Esophagus muscularis mucosa (tissue), 4 donors: ENCODE measurements at regions of chr7 and their contacts with region 1.

Region 1: GRCh38 chr7:123865517-123866117 is 20.6 kb downstream of the HYAL4 start:
- DNase-seq: no peak
- H3K4me3 ChIP-seq: no peak overlapping the region
- H3K27ac ChIP-seq: no peak overlapping the region
- H3K4me1 ChIP-seq: no peaks in the 10 kb centered on the region
- H3K27me3 ChIP-seq: no peaks in the 10 kb centered on the region
- CTCF ChIP-seq: peak; percentile 69 to 75 (median 72)
- EP300 ChIP-seq: no peak
- POLR2A ChIP-seq: no peak

Region 2: GRCh38 chr7:123580406-123581161 is 285.0 kb before region 1 on chr7:
- intact Hi-C with region 1: loop called (anchors 10 kb)
- DNase-seq: no peak
- H3K4me3 ChIP-seq: no peak overlapping the region
- H3K27ac ChIP-seq: no peak overlapping the region
- H3K4me1 ChIP-seq: no peaks in the 10 kb centered on the region
- H3K27me3 ChIP-seq: no peaks in the 10 kb centered on the region
- CTCF ChIP-seq: peak; percentile 44 to 67 (median 47)
- EP300 ChIP-seq: no peak
- POLR2A ChIP-seq: no peak

Region 3: GRCh38 chr7:123635551-123636359 is 229.9 kb before region 1 on chr7:
- intact Hi-C with region 1: loop called (anchors 10 kb)
- DNase-seq: no peak
- H3K4me3 ChIP-seq: no peak overlapping the region
- H3K27ac ChIP-seq: no peak overlapping the region
- H3K4me1 ChIP-seq: peaks cover 0 to 7% (median 0%) of the 10 kb centered on the region in 4 donors
- H3K27me3 ChIP-seq: peaks cover 0 to 4% (median 0%) of the 10 kb centered on the region in 4 donors
- CTCF ChIP-seq: peak; percentile 26 to 41 (median 34)
- EP300 ChIP-seq: no peak
- POLR2A ChIP-seq: no peak

Region 4: GRCh38 chr7:123682690-123683089 is 182.9 kb before region 1 on chr7:
- intact Hi-C with region 1: loop called (anchors 5 kb)
- DNase-seq: no peak
- H3K4me3 ChIP-seq: no peak overlapping the region
- H3K27ac ChIP-seq: no peak overlapping the region
- H3K4me1 ChIP-seq: peaks cover 0 to 11% (median 4%) of the 10 kb centered on the region in 4 donors
- H3K27me3 ChIP-seq: no peaks in the 10 kb centered on the region
- CTCF ChIP-seq: peak; percentile 34 to 54 (median 37)
- EP300 ChIP-seq: no peak
- POLR2A ChIP-seq: no peak

Region 5: DNA sequence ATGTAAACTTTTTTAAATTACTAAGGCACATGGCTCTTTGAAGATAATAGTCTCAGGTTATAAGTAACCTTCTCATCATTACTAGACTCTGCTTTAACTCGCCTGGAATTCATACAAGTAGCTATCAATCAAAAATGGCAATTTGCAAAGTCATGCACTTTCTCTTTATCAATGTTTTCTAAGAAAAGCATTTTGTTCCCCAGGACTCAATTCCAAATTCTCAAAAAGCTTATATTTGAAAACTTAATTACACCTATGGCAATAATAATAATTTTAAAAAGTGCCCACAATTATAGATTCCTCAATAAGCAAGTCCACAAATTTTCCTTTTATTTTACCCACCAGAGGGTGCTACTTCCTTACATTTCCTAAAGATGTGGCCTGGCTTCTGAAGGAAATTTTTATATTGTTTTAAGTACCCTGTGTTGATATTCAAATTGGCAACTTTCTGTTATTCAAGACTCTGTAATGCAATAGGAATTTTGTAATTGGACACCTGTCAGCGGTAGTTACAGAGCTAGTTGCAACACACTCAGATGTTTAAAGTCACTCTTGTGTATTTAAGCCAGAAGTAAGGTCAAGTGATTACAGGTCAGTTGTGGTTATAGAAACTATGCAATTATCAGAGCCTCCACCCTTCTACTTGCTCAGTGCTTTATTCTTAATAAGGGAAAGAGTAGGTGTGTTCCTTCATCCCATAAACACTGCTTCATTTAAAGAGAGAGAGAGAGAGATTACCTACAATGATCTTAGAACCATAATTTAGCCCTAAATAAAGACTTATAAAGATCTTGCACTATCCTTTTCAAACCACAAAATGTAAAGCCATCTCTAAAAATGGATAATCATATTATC is 67.7 kb before region 1 on chr7:
- intact Hi-C with region 1: loop called (anchors 2 kb)
- DNase-seq: no peak
- H3K4me3 ChIP-seq: no peak overlapping the region
- H3K27ac ChIP-seq: no peak overlapping the region
- H3K4me1 ChIP-seq: peaks cover 0 to 7% (median 5%) of the 10 kb centered on the region in 4 donors
- H3K27me3 ChIP-seq: no peaks in the 10 kb centered on the region
- CTCF ChIP-seq: peak; percentile 43 to 60 (median 55)
- EP300 ChIP-seq: no peak
- POLR2A ChIP-seq: no peak